ENCODE measurements at regions of chrX and their contacts with region 1.

Region 1: GRCh38 chrX:65697915-65698796 is 30.7 kb downstream of the MSN start:
- DNase-seq: peak; percentile 9 to 85 (median 62)
- ATAC-seq: peak; percentile 78
- H3K4me3 ChIP-seq: peak overlapping the region; percentile 32
- H3K4me3 Mint-ChIP-seq: peak overlapping the region; percentile 90
- H3K27ac ChIP-seq: peak overlapping the region; percentile 78 to 79
- H3K27ac Mint-ChIP-seq: peak overlapping the region; percentile 94
- H3K4me1 ChIP-seq: peaks cover 86% of the 10 kb centered on the region
- H3K4me1 Mint-ChIP-seq: peaks cover 90% of the 10 kb centered on the region
- H3K27me3 ChIP-seq: no peaks in the 10 kb centered on the region
- H3K27me3 Mint-ChIP-seq: no peaks in the 10 kb centered on the region
- CTCF ChIP-seq: no peak

Region 2: DNA sequence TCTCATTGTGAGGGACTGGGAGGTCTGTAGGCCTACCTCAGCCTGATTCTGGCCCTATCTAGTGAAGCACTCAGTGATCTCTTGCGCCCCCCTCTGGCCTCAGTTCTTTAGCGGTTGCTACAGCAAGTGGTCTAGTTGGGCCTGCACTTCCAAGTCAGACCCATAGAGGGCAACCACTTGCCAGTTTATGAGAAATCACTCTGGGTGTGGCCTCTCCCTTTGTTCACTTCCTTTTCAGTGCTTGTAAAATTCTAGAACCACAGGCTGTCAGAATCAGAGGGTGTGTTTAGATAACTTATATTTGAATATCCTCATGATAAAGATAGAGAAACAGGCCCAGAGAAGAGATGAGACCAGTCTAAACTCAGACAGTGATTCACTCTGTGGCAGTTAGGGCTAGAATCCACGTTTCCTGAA is 102.7 kb before region 1 on chrX:
- CTCF ChIA-PET with region 1: interaction called, 5 read pairs
- POLR2A ChIA-PET with region 1: interaction called, 11 read pairs
- intact Hi-C with region 1: loop called (anchors 2 to 5 kb)
- DNase-seq: peak; percentile 83 to 98 (median 90)
- ATAC-seq: peak; percentile 81
- H3K4me3 ChIP-seq: peak overlapping the region; percentile 14
- H3K4me3 Mint-ChIP-seq: peak overlapping the region; percentile 72
- H3K27ac ChIP-seq: peak overlapping the region; percentile 74 to 83
- H3K27ac Mint-ChIP-seq: peak overlapping the region; percentile 97
- H3K4me1 ChIP-seq: peaks cover 51% of the 10 kb centered on the region
- H3K4me1 Mint-ChIP-seq: peaks cover 45% of the 10 kb centered on the region
- H3K27me3 ChIP-seq: no peaks in the 10 kb centered on the region
- H3K27me3 Mint-ChIP-seq: no peaks in the 10 kb centered on the region
- CTCF ChIP-seq: peak; percentile 83

Region 3: GRCh38 chrX:65601530-65602220 is 96.5 kb before region 1 on chrX:
- CTCF ChIA-PET with region 1: interaction called, 4 read pairs
- POLR2A ChIA-PET with region 1: interaction called, 16 read pairs
- intact Hi-C with region 1: loop called (anchors 2 to 5 kb)
- DNase-seq: peak in 13 of 14 experiments; percentile 17 to 88 (median 42)
- ATAC-seq: peak; percentile 68
- H3K4me3 ChIP-seq: no peak overlapping the region
- H3K4me3 Mint-ChIP-seq: peak overlapping the region; percentile 71
- H3K27ac ChIP-seq: peak overlapping the region; percentile 64 to 81
- H3K27ac Mint-ChIP-seq: peak overlapping the region; percentile 95
- H3K4me1 ChIP-seq: peaks cover 65% of the 10 kb centered on the region
- H3K4me1 Mint-ChIP-seq: peaks cover 81% of the 10 kb centered on the region
- H3K27me3 ChIP-seq: no peaks in the 10 kb centered on the region
- H3K27me3 Mint-ChIP-seq: no peaks in the 10 kb centered on the region
- CTCF ChIP-seq: no peak

Region 4: DNA sequence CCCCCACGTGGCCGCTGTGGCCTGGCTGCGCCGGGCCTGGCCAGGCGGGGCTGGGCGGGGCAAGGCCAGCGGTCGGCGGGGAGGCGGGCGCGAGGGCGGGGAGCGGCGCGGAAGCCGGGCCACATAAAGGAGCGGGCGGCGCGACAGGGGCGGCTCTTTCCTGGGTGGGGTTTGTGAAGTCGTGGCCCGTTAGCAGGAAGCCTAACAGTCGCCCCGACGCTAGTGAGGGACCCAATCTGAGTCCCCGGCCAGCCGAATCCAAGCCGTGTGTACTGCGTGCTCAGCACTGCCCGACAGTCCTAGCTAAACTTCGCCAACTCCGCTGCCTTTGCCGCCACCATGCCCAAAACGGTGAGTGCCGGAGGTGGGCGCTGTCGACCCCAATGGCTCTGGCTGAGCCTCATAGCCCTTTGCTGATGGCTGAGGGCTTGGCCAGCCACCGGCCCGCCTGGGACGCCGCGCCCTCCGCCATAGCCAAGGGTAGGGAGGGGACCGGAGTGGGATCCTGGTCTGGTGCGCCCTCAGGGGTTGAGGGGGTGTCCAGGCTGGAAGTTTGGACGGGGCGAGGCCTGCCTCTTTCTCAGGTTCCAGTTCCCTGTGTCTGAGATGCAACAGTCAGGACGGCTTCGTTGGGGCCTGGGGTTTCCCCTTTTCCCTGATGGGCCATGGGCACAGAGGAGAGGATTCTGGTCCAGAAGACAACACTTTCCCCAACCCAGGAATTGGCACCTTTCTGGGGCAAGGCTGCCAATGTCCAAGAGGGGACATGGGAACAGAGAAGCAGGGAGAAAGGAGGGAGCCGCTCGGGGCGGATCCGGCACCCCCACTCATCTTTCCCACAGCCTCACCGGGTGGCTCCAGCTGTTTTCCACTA is 30.4 kb before region 1 on chrX and contains the start of gene MSN:
- CTCF ChIA-PET with region 1: interaction called, 5 read pairs
- POLR2A ChIA-PET with region 1: interaction called, 25 read pairs
- intact Hi-C with region 1: loop called (anchors 2 to 5 kb)
- DNase-seq: peak; percentile 49 to 86 (median 66)
- ATAC-seq: peak; percentile 74
- H3K4me3 ChIP-seq: peak within 1 kb of the TSS; percentile 73
- H3K4me3 Mint-ChIP-seq: peak within 1 kb of the TSS; percentile 99
- H3K27ac ChIP-seq: peak within 1 kb of the TSS; percentile 72 to 84
- H3K27ac Mint-ChIP-seq: peak within 1 kb of the TSS; percentile 93
- H3K4me1 ChIP-seq: peaks cover 24% of the 10 kb centered on the region
- H3K4me1 Mint-ChIP-seq: peaks cover 48% of the 10 kb centered on the region
- H3K27me3 ChIP-seq: no peaks in the 10 kb centered on the region
- H3K27me3 Mint-ChIP-seq: no peaks in the 10 kb centered on the region
- CTCF ChIP-seq: no peak
- total RNA-seq, gene MSN: 268 to 273 TPM

Region 5: GRCh38 chrX:65674204-65674893 is 23.8 kb before region 1 on chrX:
- CTCF ChIA-PET with region 1: interaction called, 5 read pairs
- POLR2A ChIA-PET with region 1: interaction called, 25 read pairs
- intact Hi-C with region 1: loop called (anchors 2 to 5 kb)
- DNase-seq: peak in 5 of 14 experiments; percentile 8 to 64 (median 53)
- ATAC-seq: peak; percentile 68
- H3K4me3 ChIP-seq: peak overlapping the region; percentile 44
- H3K4me3 Mint-ChIP-seq: peak overlapping the region; percentile 87
- H3K27ac ChIP-seq: peak overlapping the region; percentile 50 to 65
- H3K27ac Mint-ChIP-seq: peak overlapping the region; percentile 93
- H3K4me1 ChIP-seq: peaks cover 72% of the 10 kb centered on the region
- H3K4me1 Mint-ChIP-seq: peaks cover 92% of the 10 kb centered on the region
- H3K27me3 ChIP-seq: no peaks in the 10 kb centered on the region
- H3K27me3 Mint-ChIP-seq: no peaks in the 10 kb centered on the region
- CTCF ChIP-seq: no peak

Region 6: DNA sequence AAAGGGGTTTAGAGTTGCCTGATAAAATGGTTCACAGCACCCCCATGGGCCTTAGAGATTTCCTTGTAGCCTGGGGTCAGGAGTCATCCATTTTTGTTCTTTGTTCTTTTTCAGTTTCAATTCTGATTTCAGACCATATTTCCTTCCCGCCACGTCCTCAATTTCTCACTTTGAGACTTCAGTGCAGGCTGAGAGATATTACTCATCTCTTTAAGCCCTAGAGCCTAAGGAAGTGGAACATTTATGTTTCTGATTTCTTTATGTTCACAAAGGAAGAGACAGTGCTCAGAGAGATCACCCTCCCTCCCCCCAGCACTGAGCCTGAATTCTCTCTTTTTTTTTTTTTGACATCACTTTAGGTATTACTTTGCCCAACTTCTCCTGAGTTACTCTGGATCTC is 25.6 kb after region 1 on chrX:
- CTCF ChIA-PET with region 1: no interaction called
- POLR2A ChIA-PET with region 1: interaction called, 15 read pairs
- intact Hi-C with region 1: loop called in 1 of 2 experiments (anchors 2 kb)
- DNase-seq: peak in 6 of 14 experiments; percentile 12 to 72 (median 56)
- ATAC-seq: peak; percentile 60
- H3K4me3 ChIP-seq: no peak overlapping the region
- H3K4me3 Mint-ChIP-seq: peak overlapping the region; percentile 58
- H3K27ac ChIP-seq: peak overlapping the region; percentile 59 to 64
- H3K27ac Mint-ChIP-seq: peak overlapping the region; percentile 96
- H3K4me1 ChIP-seq: peaks cover 71% of the 10 kb centered on the region
- H3K4me1 Mint-ChIP-seq: peaks cover 88% of the 10 kb centered on the region
- H3K27me3 ChIP-seq: no peaks in the 10 kb centered on the region
- H3K27me3 Mint-ChIP-seq: no peaks in the 10 kb centered on the region
- CTCF ChIP-seq: no peak

Region 7: GRCh38 chrX:66015152-66015831 is 317.1 kb after region 1 on chrX:
- CTCF ChIA-PET with region 1: no interaction called
- POLR2A ChIA-PET with region 1: interaction called, 3 read pairs
- intact Hi-C with region 1: loop called in 1 of 2 experiments (anchors 10 kb)
- DNase-seq: peak in 4 of 14 experiments; percentile 26 to 58 (median 46)
- ATAC-seq: peak; percentile 32
- H3K4me3 ChIP-seq: peak overlapping the region; percentile 38
- H3K4me3 Mint-ChIP-seq: peak overlapping the region; percentile 58
- H3K27ac ChIP-seq: peak overlapping the region in 1 of 2 donors; percentile 55
- H3K27ac Mint-ChIP-seq: peak overlapping the region; percentile 72
- H3K4me1 ChIP-seq: peaks cover 66% of the 10 kb centered on the region
- H3K4me1 Mint-ChIP-seq: peaks cover 93% of the 10 kb centered on the region
- H3K27me3 ChIP-seq: no peaks in the 10 kb centered on the region
- H3K27me3 Mint-ChIP-seq: no peaks in the 10 kb centered on the region
- CTCF ChIP-seq: no peak